ENCODE measurements at regions of chr1 and their contacts with region 1.

Region 1: DNA sequence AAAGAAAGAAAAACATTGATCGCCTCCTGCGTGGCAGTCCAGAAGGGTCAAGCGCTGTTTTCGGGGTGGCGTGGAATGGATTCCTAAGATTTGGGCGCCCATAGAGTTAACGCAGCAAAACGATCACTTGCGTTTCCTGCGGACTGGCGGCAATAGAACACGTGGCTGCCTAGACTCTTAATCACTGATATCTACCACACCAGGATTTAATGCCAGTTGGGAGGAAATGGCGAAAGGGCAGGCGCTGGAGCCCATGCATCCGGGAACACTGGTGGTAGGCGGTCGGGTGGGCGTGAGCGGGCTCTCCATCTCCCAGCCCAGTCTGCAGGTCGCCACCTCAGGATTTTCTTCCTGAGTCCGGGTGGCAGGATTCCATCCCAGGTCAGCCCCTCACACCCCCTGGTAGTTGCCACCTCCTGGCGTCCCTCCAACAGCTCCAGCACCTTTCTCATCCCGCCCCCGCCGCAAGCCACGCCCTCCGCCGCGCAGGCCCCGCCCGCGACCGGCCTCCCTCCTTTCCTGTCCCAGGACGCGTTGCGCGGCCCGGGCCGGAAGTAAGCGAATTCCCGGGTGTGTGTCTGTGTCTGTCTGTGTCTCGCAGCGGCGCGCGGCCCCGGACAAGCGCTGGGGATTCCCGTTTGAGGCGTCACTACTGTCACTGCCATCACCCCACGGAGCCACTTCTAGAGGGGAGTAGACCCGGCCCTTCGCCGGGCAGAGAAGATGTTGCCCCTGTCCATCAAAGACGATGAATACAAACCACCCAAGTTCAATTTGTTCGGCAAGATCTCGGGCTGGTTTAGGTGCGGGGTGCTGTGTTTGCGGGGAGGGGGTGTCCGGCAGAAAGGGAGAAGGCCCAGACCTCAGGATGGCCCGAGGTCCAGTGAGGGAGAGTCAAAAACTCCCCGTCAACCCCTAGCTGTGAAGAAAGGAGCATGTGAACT is at the start of gene SLC30A7:
- DNase-seq: peak; percentile 98
- H3K4me3 Mint-ChIP-seq: peak within 1 kb of the TSS; percentile 99
- H3K27ac Mint-ChIP-seq: peak within 1 kb of the TSS; percentile 100
- H3K4me1 Mint-ChIP-seq: peaks cover 40% of the 10 kb centered on the region
- H3K27me3 Mint-ChIP-seq: no peaks in the 10 kb centered on the region
- total RNA-seq, gene SLC30A7: 40.0 to 43.4 TPM

Region 2: GRCh38 chr1:100265931-100266740 is 629.7 kb before region 1 on chr1 and contains the start of gene RTCA:
- CTCF ChIA-PET with region 1: no interaction called
- POLR2A ChIA-PET with region 1: no interaction called
- intact Hi-C with region 1: loop called (anchors 10 kb)
- DNase-seq: peak; percentile 96
- H3K4me3 Mint-ChIP-seq: peak within 1 kb of the TSS; percentile 100
- H3K27ac Mint-ChIP-seq: peak within 1 kb of the TSS; percentile 97
- H3K4me1 Mint-ChIP-seq: peaks cover 40% of the 10 kb centered on the region
- H3K27me3 Mint-ChIP-seq: no peaks in the 10 kb centered on the region
- total RNA-seq, gene RTCA: 56.6 to 58.2 TPM

Region 3: GRCh38 chr1:100912019-100912418 is 16.2 kb after region 1 on chr1:
- CTCF ChIA-PET with region 1: no interaction called
- POLR2A ChIA-PET with region 1: interaction called, 4 read pairs
- intact Hi-C with region 1: loop called (anchors 1 kb)
- DNase-seq: no peak
- H3K4me3 Mint-ChIP-seq: no peak overlapping the region
- H3K27ac Mint-ChIP-seq: no peak overlapping the region
- H3K4me1 Mint-ChIP-seq: peaks cover 37% of the 10 kb centered on the region
- H3K27me3 Mint-ChIP-seq: no peaks in the 10 kb centered on the region

Region 4: GRCh38 chr1:100955322-100955721 is 59.5 kb after region 1 on chr1:
- CTCF ChIA-PET with region 1: no interaction called
- POLR2A ChIA-PET with region 1: interaction called, 3 read pairs
- intact Hi-C with region 1: loop called (anchors 2 kb)
- DNase-seq: no peak
- H3K4me3 Mint-ChIP-seq: no peak overlapping the region
- H3K27ac Mint-ChIP-seq: peak overlapping the region; percentile 56
- H3K4me1 Mint-ChIP-seq: peaks cover 48% of the 10 kb centered on the region
- H3K27me3 Mint-ChIP-seq: no peaks in the 10 kb centered on the region

Region 5: GRCh38 chr1:101122452-101123166 is 226.8 kb after region 1 on chr1:
- CTCF ChIA-PET with region 1: no interaction called
- POLR2A ChIA-PET with region 1: no interaction called
- intact Hi-C with region 1: loop called (anchors 5 kb)
- DNase-seq: no peak
- H3K4me3 Mint-ChIP-seq: no peak overlapping the region
- H3K27ac Mint-ChIP-seq: peak overlapping the region; percentile 1
- H3K4me1 Mint-ChIP-seq: peaks cover 43% of the 10 kb centered on the region
- H3K27me3 Mint-ChIP-seq: no peaks in the 10 kb centered on the region

Measured in activated CD4-positive, alpha-beta memory T cell treated with anti-CD3 and anti-CD28 coated beads for 36 hours (primary cell).